Activated CD8-positive, alpha-beta T cell treated with anti-CD3 and anti-CD28 coated beads, Interleukin-2, amount 10 ng/mL, durations not matched to agents 7 days and 5 days (primary cell): ENCODE measurements at regions of chr2 and their contacts with region 1.

Region 1: GRCh38 chr2:157336137-157337010 is 10.8 kb upstream of the ERMN start:
- DNase-seq: peak; percentile 61
- ATAC-seq: no peak
- H3K4me3 Mint-ChIP-seq: no peak overlapping the region
- H3K27ac Mint-ChIP-seq: no peak overlapping the region
- H3K4me1 Mint-ChIP-seq: peaks cover 41% of the 10 kb centered on the region
- H3K27me3 Mint-ChIP-seq: no peaks in the 10 kb centered on the region

Region 2: DNA sequence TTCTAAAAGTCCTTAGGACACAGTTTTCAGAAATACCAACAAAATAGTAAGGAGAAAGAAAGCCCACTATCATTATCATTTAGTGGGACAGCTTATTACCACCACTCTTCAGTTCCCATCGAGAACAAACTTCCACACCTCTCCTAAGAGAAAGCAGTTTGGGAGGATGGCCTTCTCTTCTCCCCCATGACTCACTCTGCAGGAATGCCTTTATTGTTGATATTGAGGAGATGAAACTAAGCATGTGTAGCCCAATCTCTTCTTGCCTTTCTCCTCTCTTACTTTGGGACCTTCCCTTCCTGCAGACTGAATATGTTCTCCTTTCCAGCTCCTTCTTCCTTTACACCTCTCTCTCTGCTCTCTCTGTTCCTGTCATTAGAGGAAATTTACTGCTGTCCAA is 19.2 kb after region 1 on chr2:
- CTCF ChIA-PET with region 1: interaction called, 151 read pairs
- POLR2A ChIA-PET with region 1: no interaction called
- DNase-seq: no peak
- ATAC-seq: no peak
- H3K4me3 Mint-ChIP-seq: no peak overlapping the region
- H3K27ac Mint-ChIP-seq: no peak overlapping the region
- H3K4me1 Mint-ChIP-seq: no peaks in the 10 kb centered on the region
- H3K27me3 Mint-ChIP-seq: no peaks in the 10 kb centered on the region

Region 3: GRCh38 chr2:157377861-157378260 is 41.5 kb after region 1 on chr2:
- CTCF ChIA-PET with region 1: interaction called, 10 read pairs
- POLR2A ChIA-PET with region 1: no interaction called
- DNase-seq: no peak
- ATAC-seq: no peak
- H3K4me3 Mint-ChIP-seq: no peak overlapping the region
- H3K27ac Mint-ChIP-seq: no peak overlapping the region
- H3K4me1 Mint-ChIP-seq: peaks cover 6% of the 10 kb centered on the region
- H3K27me3 Mint-ChIP-seq: no peaks in the 10 kb centered on the region

Region 4: GRCh38 chr2:157413326-157414035 is 77.1 kb after region 1 on chr2:
- CTCF ChIA-PET with region 1: interaction called, 27 read pairs
- POLR2A ChIA-PET with region 1: no interaction called
- DNase-seq: peak; percentile 79
- ATAC-seq: peak; percentile 84
- H3K4me3 Mint-ChIP-seq: peak overlapping the region; percentile 60
- H3K27ac Mint-ChIP-seq: peak overlapping the region; percentile 86
- H3K4me1 Mint-ChIP-seq: peaks cover 83% of the 10 kb centered on the region
- H3K27me3 Mint-ChIP-seq: no peaks in the 10 kb centered on the region

Region 5: DNA sequence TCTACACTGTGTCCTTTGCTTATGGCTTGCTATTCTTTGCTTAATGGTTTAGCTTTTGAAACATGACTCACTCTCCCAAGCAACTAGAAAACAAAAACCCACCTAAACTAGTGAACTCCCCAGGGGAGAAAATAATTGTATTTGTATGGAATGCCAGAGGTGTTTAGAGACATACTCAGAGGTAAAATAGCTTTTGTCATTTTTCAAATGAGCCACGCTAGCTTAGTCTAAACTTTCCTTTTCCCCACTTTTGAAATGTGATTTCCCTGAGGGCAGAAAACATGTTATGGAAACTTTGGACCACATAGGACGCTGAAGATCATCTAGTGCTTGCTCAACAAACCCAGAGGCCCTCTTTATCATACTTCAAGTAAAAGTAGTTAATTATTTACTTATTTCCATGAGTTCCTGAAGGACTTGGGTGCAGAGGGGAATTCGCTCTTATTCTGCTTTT is 124.0 kb after region 1 on chr2:
- CTCF ChIA-PET with region 1: interaction called, 11 read pairs
- POLR2A ChIA-PET with region 1: no interaction called
- DNase-seq: no peak
- ATAC-seq: no peak
- H3K4me3 Mint-ChIP-seq: no peak overlapping the region
- H3K27ac Mint-ChIP-seq: peak overlapping the region; percentile 36
- H3K4me1 Mint-ChIP-seq: peaks cover 89% of the 10 kb centered on the region
- H3K27me3 Mint-ChIP-seq: no peaks in the 10 kb centered on the region

Region 6: GRCh38 chr2:157492189-157492773 is 155.9 kb after region 1 on chr2:
- CTCF ChIA-PET with region 1: interaction called, 27 read pairs
- POLR2A ChIA-PET with region 1: no interaction called
- DNase-seq: peak; percentile 85
- ATAC-seq: peak; percentile 85
- H3K4me3 Mint-ChIP-seq: no peak overlapping the region
- H3K27ac Mint-ChIP-seq: no peak overlapping the region
- H3K4me1 Mint-ChIP-seq: peaks cover 66% of the 10 kb centered on the region
- H3K27me3 Mint-ChIP-seq: no peaks in the 10 kb centered on the region